ENCODE measurements at regions of chr3 and their contacts with region 1.

Region 1: DNA sequence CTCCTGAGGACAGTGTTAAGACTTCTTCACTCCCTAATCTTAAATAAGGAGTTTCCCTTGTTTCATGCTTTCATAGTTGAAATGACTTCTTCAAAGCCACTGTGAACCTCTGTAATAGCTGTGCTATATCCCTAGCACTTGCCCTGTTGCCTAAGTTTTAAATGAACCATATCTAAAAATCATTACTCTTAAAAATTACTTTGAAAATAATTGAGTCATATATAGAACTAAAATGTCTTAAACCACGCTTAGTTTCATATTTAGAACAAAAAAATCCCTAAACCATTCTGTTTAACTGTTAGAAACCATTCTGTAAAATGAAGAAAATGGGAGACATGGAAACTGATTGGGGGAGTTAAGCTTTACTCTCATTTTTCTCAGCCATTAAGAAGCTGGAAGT is 29.8 kb downstream of the DNAJC19 start:
- DNase-seq: no peak
- H3K4me3 ChIP-seq: no peak overlapping the region
- H3K27ac ChIP-seq: no peak overlapping the region
- H3K4me1 ChIP-seq: no peaks in the 10 kb centered on the region
- H3K27me3 ChIP-seq: no peaks in the 10 kb centered on the region
- CTCF ChIP-seq: no peak

Region 2: DNA sequence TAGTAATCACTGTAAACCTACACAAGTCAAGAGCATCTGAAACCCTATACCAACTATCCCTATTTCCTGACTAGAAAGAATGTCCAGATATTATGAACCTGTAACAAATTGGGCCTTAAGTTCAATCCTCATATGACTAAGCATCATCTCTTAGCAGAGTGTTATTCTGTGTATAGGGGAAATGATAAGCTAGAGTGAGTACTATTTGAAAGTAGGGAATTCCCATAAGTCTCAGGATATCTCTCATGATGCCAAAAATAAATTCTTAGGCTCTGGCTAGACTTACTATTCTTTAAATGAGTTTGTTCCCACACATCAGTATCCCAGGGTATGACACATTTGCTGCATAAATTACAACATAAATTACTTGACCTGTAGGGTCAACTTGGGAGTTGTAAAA is 1370.5 kb before region 1 on chr3:
- CTCF ChIA-PET with region 1: no interaction called
- POLR2A ChIA-PET with region 1: no interaction called
- intact Hi-C with region 1: loop called (anchors 10 kb)
- DNase-seq: no peak
- H3K4me3 ChIP-seq: no peak overlapping the region
- H3K27ac ChIP-seq: no peak overlapping the region
- H3K4me1 ChIP-seq: no peaks in the 10 kb centered on the region
- H3K27me3 ChIP-seq: no peaks in the 10 kb centered on the region
- CTCF ChIP-seq: no peak